Activated T-helper 1 cell treated with anti-CD3 and anti-CD28 coated beads, Interleukin-12 subunit alpha, Interleukin-12 subunit beta, Interleukin-2, Interleukin-4 antibody, amounts not matched to agents 30 ng/mL and 10 ng/mL and 1 ng/mL, durations not matched to agents 14 hours and 24 hours and 36 hours (primary cell): ENCODE measurements at regions of chr14 and their contacts with region 1.

Region 1: DNA sequence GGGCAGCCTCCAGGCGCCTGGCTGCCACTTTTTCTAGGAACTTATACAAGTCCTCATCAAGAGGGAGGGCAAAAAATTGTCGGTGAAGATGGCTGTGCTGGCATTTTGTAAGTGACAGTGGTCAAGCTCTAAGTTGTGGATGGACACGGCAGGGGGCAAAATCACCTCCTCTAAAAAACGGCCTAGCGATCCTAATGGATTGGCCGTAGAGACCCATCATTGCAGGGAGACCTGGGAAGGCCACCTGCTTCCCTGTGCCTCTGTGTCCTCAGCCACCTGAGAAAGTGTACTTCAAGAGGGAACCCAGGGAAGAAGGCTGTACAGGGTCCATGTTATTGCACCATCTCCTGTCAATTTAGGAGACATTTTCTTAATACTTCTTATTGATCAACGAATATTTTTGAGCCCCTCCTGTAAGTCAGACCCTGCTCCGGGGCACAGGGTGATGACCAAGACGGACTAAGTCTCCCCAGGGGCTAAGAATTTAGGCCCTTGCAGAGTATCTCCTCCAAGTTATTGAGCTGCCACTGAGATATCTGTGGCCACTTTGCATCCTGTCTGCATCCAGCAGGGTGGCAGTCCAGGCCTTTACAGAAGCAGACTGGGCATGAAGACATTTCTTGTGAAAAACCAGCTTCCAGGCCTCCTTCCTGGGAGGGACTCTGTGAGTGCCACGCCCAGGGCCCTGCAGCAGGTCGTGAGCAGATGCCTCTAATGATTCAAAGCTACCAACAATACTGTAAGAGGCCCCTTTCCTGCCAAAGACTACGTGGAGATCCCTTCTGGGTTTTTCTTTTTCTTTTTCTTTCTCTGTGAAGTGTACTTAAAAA is 40.5 kb downstream of the PSMA6 start:
- DNase-seq: peak; percentile 43
- H3K4me3 Mint-ChIP-seq: peak overlapping the region; percentile 60
- H3K27ac Mint-ChIP-seq: peak overlapping the region; percentile 83
- H3K4me1 Mint-ChIP-seq: peaks cover 31% of the 10 kb centered on the region
- H3K27me3 Mint-ChIP-seq: no peaks in the 10 kb centered on the region

Region 2: DNA sequence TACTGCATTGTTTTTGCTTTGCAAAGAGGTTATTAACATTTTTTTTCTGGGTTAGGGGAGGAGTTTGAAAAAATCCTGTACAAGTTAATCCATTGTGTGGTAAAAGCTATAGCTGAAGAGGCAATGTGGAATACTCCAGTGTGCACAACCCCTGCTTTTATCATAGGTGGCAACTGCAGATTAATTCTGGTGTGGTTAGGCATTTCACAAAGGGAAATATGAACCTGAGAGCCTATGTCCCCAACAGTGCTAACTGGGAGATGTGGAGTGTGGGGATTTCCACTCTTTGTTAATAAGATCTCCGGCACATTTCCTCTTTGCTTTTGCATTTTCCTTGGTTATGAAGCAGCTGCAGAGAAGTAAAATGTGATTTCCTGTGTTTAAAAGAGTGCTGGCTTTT is 176.8 kb before region 1 on chr14:
- intact Hi-C with region 1: no loop called
- DNase-seq: peak; percentile 16
- H3K4me3 Mint-ChIP-seq: peak overlapping the region; percentile 42
- H3K27ac Mint-ChIP-seq: peak overlapping the region; percentile 57
- H3K4me1 Mint-ChIP-seq: peaks cover 54% of the 10 kb centered on the region
- H3K27me3 Mint-ChIP-seq: no peaks in the 10 kb centered on the region

Region 3: GRCh38 chr14:35277179-35277578 is 55.6 kb before region 1 on chr14:
- intact Hi-C with region 1: no loop called
- DNase-seq: no peak
- H3K4me3 Mint-ChIP-seq: no peak overlapping the region
- H3K27ac Mint-ChIP-seq: no peak overlapping the region
- H3K4me1 Mint-ChIP-seq: peaks cover 6% of the 10 kb centered on the region
- H3K27me3 Mint-ChIP-seq: no peaks in the 10 kb centered on the region

Region 4: DNA sequence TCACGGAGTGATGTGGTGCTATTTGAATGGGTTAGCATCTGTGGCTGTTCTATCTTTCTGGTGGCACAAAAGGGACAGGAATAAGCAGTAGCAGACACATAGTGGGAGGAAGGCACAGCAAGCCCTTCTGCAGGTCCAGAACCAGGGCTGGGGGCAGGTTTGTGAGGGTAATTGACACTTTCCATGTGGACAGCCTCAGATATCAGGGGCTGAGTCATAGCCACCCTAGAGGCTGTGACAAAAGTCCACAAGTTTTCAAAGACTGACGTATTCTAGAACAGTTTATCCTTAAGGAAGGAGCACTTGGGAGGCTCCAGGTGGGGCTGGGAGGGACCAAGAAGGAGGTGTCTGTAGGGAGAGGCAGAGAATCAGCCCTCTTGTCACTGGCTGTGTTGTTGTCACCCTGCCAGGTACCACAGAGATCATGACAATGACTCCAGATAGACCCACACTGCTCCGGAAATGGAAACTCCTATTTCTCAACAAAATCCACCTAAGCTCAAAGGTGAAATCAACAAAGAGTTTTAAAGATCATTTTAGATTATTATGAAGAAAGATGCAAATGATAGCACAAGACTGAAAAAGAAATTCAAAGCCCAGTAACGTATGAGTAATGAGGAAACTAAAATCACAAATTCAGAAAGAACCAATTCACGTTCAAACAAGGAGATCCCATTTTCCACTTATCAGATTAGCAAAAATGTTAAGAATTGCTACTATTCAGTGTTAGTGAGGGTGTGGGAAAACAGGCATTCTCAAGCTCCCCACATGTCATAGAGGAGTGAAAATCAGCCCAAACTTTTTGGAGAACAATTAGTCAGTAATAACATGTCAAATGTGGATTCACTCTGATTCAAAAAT is 23.5 kb after region 1 on chr14:
- intact Hi-C with region 1: loop called (anchors 1 kb)
- DNase-seq: no peak
- H3K4me3 Mint-ChIP-seq: no peak overlapping the region
- H3K27ac Mint-ChIP-seq: peak overlapping the region; percentile 33
- H3K4me1 Mint-ChIP-seq: peaks cover 16% of the 10 kb centered on the region
- H3K27me3 Mint-ChIP-seq: no peaks in the 10 kb centered on the region

Region 5: DNA sequence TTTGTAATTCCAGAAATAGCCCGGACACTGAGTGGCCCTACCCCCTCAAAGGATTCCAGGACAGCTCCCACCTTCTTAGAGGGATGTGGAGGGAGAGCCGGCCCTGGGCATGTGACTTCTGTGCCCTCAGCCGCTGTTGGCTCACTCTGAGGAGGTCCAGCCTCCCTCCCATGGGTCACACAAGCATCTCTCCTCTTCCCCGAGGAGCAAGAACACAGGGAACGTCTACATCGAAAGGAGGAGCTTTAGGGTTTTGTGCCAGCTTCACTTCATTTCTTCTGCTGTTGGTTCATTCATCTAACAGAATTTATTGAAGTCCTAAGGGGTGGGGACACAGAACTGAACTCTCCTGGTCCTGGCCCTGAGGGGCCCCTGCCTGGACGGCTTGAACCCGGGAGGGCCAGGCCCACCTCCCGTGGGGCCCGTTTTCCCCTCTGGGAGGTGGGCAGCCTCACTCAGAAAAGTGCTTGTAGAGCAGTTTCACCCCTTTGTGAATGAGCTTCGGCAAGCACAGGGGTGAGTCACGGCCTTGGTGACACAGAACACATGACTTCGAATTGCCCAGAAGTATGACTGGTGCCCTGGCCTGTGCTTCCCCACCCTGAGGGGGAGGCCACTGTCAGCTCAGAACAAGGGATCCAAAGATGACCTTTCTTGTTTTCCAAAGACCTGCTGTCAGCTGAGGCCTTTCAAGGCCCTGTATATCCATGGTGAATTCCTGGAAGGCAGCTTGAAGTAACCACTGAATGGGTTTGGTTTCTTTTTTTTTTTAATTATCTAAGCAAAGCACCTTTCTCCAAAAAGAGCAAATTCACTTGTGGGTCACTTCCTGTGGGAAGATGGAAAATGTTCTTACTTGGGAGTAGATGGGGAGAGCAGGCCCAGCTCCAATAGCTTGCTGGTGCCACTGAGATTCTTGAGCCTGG is 32.7 kb after region 1 on chr14:
- intact Hi-C with region 1: loop called (anchors 1 kb)
- DNase-seq: peak; percentile 52
- H3K4me3 Mint-ChIP-seq: peak overlapping the region; percentile 47
- H3K27ac Mint-ChIP-seq: peak overlapping the region; percentile 93
- H3K4me1 Mint-ChIP-seq: peaks cover 43% of the 10 kb centered on the region
- H3K27me3 Mint-ChIP-seq: no peaks in the 10 kb centered on the region

Region 6: DNA sequence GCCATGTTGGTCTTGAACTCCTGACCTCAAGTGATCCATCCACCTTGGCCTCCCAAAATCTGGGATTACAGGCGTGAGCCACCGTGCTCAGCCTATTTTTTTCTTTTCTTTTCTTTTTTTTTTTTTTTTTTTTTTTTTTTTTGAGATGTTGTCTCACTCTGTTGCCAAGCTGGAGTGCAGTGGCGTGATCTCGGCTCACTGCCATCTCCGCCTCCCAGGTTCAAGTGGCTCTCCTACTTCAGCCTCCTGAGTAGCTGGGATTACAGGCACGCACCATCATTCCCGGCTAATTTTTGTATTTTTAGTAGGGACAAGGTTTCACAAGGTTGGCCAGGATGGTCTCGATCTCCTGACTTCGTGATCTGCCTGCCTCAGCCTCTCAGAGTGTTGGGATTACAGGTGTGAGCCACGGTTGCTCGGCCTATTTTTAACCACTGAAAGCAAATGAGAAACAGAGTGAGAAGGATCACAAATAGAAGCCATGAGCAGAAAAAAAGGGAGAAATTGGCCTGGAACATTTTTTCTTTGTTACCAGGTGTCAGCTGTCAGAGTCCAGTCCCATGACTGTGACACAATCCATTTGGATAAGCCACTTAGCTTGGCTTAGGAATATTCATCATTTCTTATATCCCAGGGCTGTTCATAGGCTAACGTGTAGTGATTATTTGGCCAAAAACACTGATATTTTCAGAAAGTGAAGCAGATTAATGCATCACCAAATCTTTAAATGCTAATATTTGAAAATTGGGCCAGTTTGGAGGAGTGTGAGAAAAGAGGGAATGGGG is 79.7 kb after region 1 on chr14:
- intact Hi-C with region 1: no loop called
- DNase-seq: no peak
- H3K4me3 Mint-ChIP-seq: no peak overlapping the region
- H3K27ac Mint-ChIP-seq: no peak overlapping the region
- H3K4me1 Mint-ChIP-seq: peaks cover 52% of the 10 kb centered on the region
- H3K27me3 Mint-ChIP-seq: peaks cover 2% of the 10 kb centered on the region

Region 7: DNA sequence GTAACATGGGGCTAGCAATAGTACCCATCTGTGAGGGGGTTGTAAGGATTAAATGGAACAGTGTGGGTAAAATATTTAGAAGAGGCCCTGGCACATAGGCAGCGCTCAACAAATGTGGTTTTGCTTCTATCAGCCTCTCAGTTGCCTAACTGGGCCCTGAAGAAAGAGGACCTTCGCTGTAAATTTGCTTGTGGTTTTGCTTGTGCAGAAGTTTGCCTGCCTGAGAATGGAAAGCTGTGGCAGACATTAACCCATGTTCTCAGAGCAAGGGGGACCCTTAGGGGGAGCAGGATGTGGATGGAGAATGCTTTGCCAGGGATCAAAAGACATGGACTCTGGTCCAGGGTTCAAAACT is 653.5 kb after region 1 on chr14:
- intact Hi-C with region 1: no loop called
- DNase-seq: no peak
- H3K4me3 Mint-ChIP-seq: no peak overlapping the region
- H3K27ac Mint-ChIP-seq: no peak overlapping the region
- H3K4me1 Mint-ChIP-seq: no peaks in the 10 kb centered on the region
- H3K27me3 Mint-ChIP-seq: peaks cover 2% of the 10 kb centered on the region